ENCODE measurements at regions of chr5 and their contacts with region 1.

Region 1: GRCh38 chr5:156584528-156585270 is 257.7 kb downstream of the SGCD start:
- DNase-seq: no peak
- ATAC-seq: peak; percentile 21 to 77 (median 48)
- H3K4me3 ChIP-seq: no peak overlapping the region
- H3K27ac ChIP-seq: peak overlapping the region; percentile 11 to 86 (median 76)
- H3K4me1 ChIP-seq: peaks cover 4 to 57% (median 26%) of the 10 kb centered on the region in 9 donors
- H3K27me3 ChIP-seq: no peaks in the 10 kb centered on the region
- CTCF ChIP-seq: no peak

Region 2: DNA sequence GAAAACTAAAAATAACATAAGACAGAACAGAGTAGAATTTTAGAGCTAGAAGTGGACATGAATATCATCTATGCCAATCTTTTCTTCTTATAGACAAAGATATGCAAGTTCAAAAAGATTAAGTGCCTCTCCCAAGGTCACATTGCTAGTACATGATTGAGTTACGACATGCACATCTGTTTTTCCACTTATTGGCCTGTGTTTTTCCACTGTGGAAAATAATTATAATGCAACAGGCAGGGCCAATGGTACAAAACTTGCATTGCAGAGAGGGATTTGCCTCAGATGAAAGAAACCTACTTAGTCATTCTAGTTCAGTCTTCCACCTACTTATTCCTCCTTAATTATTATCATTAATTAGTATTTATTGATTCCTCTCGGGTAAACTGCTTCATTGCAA is 665.6 kb before region 1 on chr5:
- intact Hi-C with region 1: no loop called
- DNase-seq: no peak
- ATAC-seq: peak in 4 of 8 donors; percentile 17 to 62 (median 51)
- H3K4me3 ChIP-seq: no peak overlapping the region
- H3K27ac ChIP-seq: peak overlapping the region in 1 of 10 donors; percentile 32
- H3K4me1 ChIP-seq: peaks cover 0 to 22% (median 9%) of the 10 kb centered on the region in 9 donors
- H3K27me3 ChIP-seq: no peaks in the 10 kb centered on the region
- CTCF ChIP-seq: no peak

Region 3: GRCh38 chr5:156475182-156476157 is 109.2 kb before region 1 on chr5:
- intact Hi-C with region 1: loop called in 1 of 10 experiments (anchors 10 kb)
- DNase-seq: peak in 1 of 2 donors; percentile 55
- ATAC-seq: peak; percentile 77 to 90 (median 88)
- H3K4me3 ChIP-seq: no peak overlapping the region
- H3K27ac ChIP-seq: peak overlapping the region in 8 of 10 donors; percentile 10 to 71 (median 64)
- H3K4me1 ChIP-seq: peaks cover 10 to 66% (median 45%) of the 10 kb centered on the region in 9 donors
- H3K27me3 ChIP-seq: no peaks in the 10 kb centered on the region
- CTCF ChIP-seq: peak in 2 of 9 donors; percentile 15 to 21

Region 4: GRCh38 chr5:156686796-156687195 is 102.1 kb after region 1 on chr5:
- intact Hi-C with region 1: loop called in 1 of 10 experiments (anchors 5 kb)
- DNase-seq: no peak
- ATAC-seq: peak in 6 of 8 donors; percentile 7 to 66 (median 30)
- H3K4me3 ChIP-seq: no peak overlapping the region
- H3K27ac ChIP-seq: peak overlapping the region; percentile 8 to 80 (median 66)
- H3K4me1 ChIP-seq: peaks cover 0 to 52% (median 10%) of the 10 kb centered on the region in 9 donors
- H3K27me3 ChIP-seq: no peaks in the 10 kb centered on the region
- CTCF ChIP-seq: no peak

Region 5: GRCh38 chr5:156815988-156816599 is 231.4 kb after region 1 on chr5:
- intact Hi-C with region 1: loop called in 1 of 10 experiments (anchors 10 kb)
- DNase-seq: peak in 1 of 2 donors; percentile 26
- ATAC-seq: peak in 4 of 8 donors; percentile 35 to 59 (median 52)
- H3K4me3 ChIP-seq: no peak overlapping the region
- H3K27ac ChIP-seq: no peak overlapping the region
- H3K4me1 ChIP-seq: no peaks in the 10 kb centered on the region
- H3K27me3 ChIP-seq: no peaks in the 10 kb centered on the region
- CTCF ChIP-seq: peak in 8 of 9 donors; percentile 17 to 62 (median 49)